ENCODE measurements at regions of chr3 and their contacts with region 1.

Region 1: GRCh38 chr3:106333911-106334618 is 465.3 kb upstream of the CBLB start:
- DNase-seq: peak; percentile 84
- ATAC-seq: peak; percentile 70
- H3K4me3 Mint-ChIP-seq: peak overlapping the region; percentile 67
- H3K27ac Mint-ChIP-seq: peak overlapping the region; percentile 97
- H3K4me1 Mint-ChIP-seq: peaks cover 89% of the 10 kb centered on the region
- H3K27me3 Mint-ChIP-seq: no peaks in the 10 kb centered on the region

Region 2: DNA sequence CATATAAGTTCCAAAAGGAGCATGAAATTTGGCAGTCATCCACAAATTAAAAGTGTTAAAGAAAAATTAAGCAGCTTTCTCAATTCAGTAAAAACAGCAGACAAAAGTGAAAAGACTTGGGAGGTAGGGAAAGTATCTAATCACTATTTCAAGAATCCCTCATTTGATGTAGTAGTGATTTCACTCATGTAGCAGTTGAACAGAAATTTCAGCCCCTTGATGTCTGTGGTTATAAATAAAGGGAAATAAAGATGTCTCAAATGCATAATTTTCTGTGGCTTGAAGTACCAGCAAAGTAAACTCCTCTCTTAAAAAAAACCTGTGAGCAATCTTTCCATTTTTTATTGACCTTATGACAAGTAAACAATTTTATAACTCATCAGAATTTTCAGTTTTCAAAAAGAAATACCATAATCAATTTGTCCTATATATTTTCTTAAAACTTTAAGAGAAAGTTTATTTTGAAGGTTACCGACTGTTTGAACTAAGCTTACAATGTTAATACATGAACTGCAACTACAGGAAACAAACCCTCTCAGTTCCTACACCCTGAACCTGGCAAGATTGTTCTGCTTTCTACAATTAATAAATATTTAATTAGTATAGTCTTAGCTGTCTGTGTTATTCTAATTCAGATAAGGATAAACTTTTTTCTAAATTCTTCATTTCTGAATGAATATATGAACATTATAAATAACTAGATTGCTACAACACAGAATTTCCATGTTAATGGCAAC is 559.5 kb before region 1 on chr3:
- CTCF ChIA-PET with region 1: no interaction called
- POLR2A ChIA-PET with region 1: no interaction called
- intact Hi-C with region 1: loop called in 1 of 2 experiments (anchors 10 kb)
- DNase-seq: no peak
- ATAC-seq: peak; percentile 72
- H3K4me3 Mint-ChIP-seq: peak overlapping the region; percentile 12
- H3K27ac Mint-ChIP-seq: peak overlapping the region; percentile 78
- H3K4me1 Mint-ChIP-seq: peaks cover 81% of the 10 kb centered on the region
- H3K27me3 Mint-ChIP-seq: no peaks in the 10 kb centered on the region

Region 3: GRCh38 chr3:105868742-105869530 is 465.1 kb before region 1 on chr3 and contains the start of gene CBLB:
- CTCF ChIA-PET with region 1: no interaction called
- POLR2A ChIA-PET with region 1: no interaction called
- intact Hi-C with region 1: loop called (anchors 1 to 2 kb)
- DNase-seq: peak; percentile 91
- ATAC-seq: peak; percentile 86
- H3K4me3 Mint-ChIP-seq: peak within 1 kb of the TSS; percentile 100
- H3K27ac Mint-ChIP-seq: peak within 1 kb of the TSS; percentile 100
- H3K4me1 Mint-ChIP-seq: peaks cover 36% of the 10 kb centered on the region
- H3K27me3 Mint-ChIP-seq: no peaks in the 10 kb centered on the region
- total RNA-seq, gene CBLB: 112 to 163 TPM

Region 4: DNA sequence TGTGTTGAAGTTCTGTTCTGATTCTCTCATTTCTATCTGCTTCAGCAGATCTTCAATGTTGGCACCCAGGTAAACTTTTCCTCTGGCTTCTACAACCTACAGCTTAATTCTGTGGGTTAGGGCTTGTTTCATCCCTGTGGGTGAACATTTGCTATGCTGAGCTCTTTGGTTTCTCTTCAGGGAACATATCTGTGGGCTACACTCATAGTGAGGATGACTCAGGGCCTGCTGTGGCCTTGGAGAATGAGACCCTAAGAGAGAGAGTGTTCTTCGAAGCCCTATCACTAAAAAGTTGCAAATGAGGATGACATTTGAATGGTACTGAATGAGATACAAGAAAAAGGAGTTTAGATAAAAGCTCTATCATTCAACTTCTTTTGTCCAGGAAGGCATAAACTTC is 119.0 kb before region 1 on chr3:
- CTCF ChIA-PET with region 1: interaction called, 6 read pairs
- POLR2A ChIA-PET with region 1: no interaction called
- intact Hi-C with region 1: loop called (anchors 1 to 2 kb)
- DNase-seq: peak; percentile 62
- ATAC-seq: peak; percentile 91
- H3K4me3 Mint-ChIP-seq: no peak overlapping the region
- H3K27ac Mint-ChIP-seq: peak overlapping the region; percentile 73
- H3K4me1 Mint-ChIP-seq: peaks cover 59% of the 10 kb centered on the region
- H3K27me3 Mint-ChIP-seq: no peaks in the 10 kb centered on the region

Region 5: GRCh38 chr3:106299300-106300098 is 34.6 kb before region 1 on chr3:
- CTCF ChIA-PET with region 1: interaction called, 5 read pairs
- POLR2A ChIA-PET with region 1: no interaction called
- intact Hi-C with region 1: loop called (anchors 1 to 2 kb)
- DNase-seq: peak; percentile 39
- ATAC-seq: peak; percentile 76
- H3K4me3 Mint-ChIP-seq: no peak overlapping the region
- H3K27ac Mint-ChIP-seq: no peak overlapping the region
- H3K4me1 Mint-ChIP-seq: peaks cover 53% of the 10 kb centered on the region
- H3K27me3 Mint-ChIP-seq: no peaks in the 10 kb centered on the region

Region 6: GRCh38 chr3:106401666-106402490 is 67.8 kb after region 1 on chr3:
- CTCF ChIA-PET with region 1: no interaction called
- POLR2A ChIA-PET with region 1: no interaction called
- intact Hi-C with region 1: no loop called
- DNase-seq: no peak
- ATAC-seq: no peak
- H3K4me3 Mint-ChIP-seq: no peak overlapping the region
- H3K27ac Mint-ChIP-seq: no peak overlapping the region
- H3K4me1 Mint-ChIP-seq: peaks cover 3% of the 10 kb centered on the region
- H3K27me3 Mint-ChIP-seq: peaks cover 2% of the 10 kb centered on the region

Region 7: DNA sequence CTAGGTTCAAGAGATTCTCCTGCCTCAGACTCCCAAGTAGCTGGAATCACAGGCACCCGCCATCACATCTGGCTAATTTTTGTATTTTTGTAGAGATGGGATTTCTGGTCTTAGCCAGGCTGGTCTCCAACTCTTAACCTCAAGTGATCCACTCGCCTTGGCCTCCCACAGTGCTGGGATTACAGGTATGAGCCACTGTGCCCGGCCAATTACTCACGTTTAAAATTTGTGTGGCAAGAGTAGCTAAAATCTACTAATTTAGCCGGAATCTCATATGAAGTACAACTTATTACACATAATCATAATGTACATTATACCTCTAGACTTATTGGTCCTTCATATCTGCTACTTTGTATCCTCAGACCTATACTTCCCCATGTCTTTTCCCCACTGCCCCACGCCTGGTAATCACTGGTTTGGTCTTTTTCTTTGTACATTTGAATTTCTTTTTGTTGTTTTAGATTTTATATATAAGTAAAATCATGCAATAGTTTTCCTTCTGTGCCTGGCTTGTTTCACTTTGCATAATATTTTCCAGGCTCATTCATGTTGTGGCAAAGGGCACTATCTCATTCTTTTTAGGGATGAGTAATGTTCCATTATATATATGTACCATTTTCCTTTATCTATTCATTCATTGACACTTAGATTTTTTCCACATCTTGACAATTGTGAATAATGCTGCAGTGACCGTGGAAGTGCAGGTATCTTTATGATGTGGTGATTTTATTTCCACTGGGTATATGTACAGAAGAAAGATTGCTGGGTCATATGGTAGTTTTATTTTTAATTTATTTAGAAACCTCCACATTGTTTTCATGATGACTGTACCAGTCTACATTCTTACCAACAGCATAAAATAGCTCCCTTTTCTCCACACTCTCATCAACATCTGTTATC is 139.8 kb after region 1 on chr3:
- CTCF ChIA-PET with region 1: no interaction called
- POLR2A ChIA-PET with region 1: no interaction called
- intact Hi-C with region 1: loop called (anchors 1 kb)
- DNase-seq: peak; percentile 47
- ATAC-seq: peak; percentile 86
- H3K4me3 Mint-ChIP-seq: no peak overlapping the region
- H3K27ac Mint-ChIP-seq: peak overlapping the region; percentile 88
- H3K4me1 Mint-ChIP-seq: peaks cover 28% of the 10 kb centered on the region
- H3K27me3 Mint-ChIP-seq: no peaks in the 10 kb centered on the region